A549 (cell line): ENCODE measurements at regions of chr19 and their contacts with region 1.

Region 1: GRCh38 chr19:42534391-42534790 is 6.1 kb upstream of the CEACAM1 start:
- DNase-seq: no peak
- ATAC-seq: no peak
- H3K4me3 ChIP-seq: no peak overlapping the region
- H3K27ac ChIP-seq: no peak overlapping the region
- H3K4me1 ChIP-seq: no peaks in the 10 kb centered on the region
- CTCF ChIP-seq: no peak
- EP300 ChIP-seq: no peak
- POLR2A ChIP-seq: no peak
- RAD21 ChIP-seq: no peak

Region 2: DNA sequence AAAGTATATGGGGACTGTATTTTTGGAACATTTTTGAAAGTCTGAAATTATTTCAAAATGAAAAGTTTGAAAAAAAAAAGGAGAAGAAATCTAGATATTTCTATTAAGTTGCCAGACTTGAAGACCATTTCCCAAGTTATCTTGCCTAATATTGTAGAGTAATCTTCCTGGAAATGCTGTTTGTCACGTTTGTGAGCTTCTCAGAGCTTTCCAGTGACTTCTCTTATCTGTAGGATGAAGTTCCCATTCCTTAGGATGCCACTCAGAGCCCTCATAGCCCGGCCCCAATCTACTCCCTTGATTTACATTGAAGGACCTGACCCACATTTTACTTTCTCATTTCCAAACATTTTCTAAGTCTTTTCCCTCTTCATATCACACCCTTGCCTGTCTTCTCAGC is 36.7 kb after region 1 on chr19:
- CTCF ChIA-PET with region 1: interaction called, 14 read pairs
- POLR2A ChIA-PET with region 1: no interaction called
- DNase-seq: no peak
- ATAC-seq: no peak
- H3K4me3 ChIP-seq: no peak overlapping the region
- H3K27ac ChIP-seq: no peak overlapping the region
- H3K4me1 ChIP-seq: no peaks in the 10 kb centered on the region
- CTCF ChIP-seq: no peak
- EP300 ChIP-seq: no peak
- POLR2A ChIP-seq: no peak
- RAD21 ChIP-seq: no peak